ENCODE measurements at regions of chr3 and their contacts with region 1.

Region 1: DNA sequence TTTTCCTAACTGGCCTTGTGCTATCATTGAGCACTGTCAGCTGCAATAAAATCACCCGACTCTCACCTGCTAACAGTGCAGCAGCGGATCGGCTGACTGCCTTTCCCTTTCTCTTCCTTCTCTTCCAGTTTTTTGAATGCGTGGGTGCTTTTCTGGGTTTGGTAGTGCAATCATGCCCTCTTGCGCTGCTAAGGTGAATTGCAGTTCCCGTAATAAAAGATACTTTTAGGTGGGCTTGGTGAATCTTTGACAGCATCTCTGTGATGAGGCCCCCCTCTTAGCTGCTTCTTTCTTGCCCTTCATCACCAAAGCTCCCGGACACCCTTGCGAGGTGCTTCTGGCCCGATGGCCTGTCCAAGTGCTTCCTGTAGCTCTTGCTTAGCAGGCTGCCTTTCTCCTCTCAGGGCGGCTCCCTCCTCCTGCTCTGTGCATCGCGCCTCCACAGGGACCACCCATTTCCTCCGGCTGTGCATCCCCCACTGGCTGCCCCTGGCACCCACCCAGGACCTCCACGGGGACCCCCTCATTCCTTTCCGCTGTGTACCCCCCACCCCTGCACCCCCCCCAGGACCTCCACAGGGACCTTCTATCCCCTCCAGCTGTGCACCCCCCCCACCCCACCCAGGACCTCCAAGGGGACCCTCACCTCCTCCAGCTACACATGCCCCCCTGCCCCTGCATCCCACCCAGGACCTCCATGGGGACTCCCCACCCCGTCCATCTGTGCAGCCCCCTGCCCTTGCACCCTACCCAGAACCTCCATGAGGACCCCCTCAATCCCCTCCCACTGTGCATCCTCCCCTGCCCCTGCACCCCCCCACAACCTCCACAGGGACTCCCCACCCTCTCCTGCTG is 50.8 kb upstream of the RPL32 start:
- DNase-seq: peak in 1 of 2 experiments; percentile 70
- H3K4me3 ChIP-seq: no peak overlapping the region
- H3K27ac ChIP-seq: no peak overlapping the region
- H3K4me1 ChIP-seq: peaks cover 0 to 2% (median 0%) of the 10 kb centered on the region in 4 experiments; a peak in 2 of 7 replicates
- H3K27me3 ChIP-seq: peaks cover 0 to 9% (median 1%) of the 10 kb centered on the region in 4 experiments; a peak in 4 of 7 replicates
- CTCF ChIP-seq: peak; percentile 32 to 92 (median 89)
- EP300 ChIP-seq: no peak
- POLR2A ChIP-seq: no peak
- RAD21 ChIP-seq: peak; percentile 98 to 99

Region 2: DNA sequence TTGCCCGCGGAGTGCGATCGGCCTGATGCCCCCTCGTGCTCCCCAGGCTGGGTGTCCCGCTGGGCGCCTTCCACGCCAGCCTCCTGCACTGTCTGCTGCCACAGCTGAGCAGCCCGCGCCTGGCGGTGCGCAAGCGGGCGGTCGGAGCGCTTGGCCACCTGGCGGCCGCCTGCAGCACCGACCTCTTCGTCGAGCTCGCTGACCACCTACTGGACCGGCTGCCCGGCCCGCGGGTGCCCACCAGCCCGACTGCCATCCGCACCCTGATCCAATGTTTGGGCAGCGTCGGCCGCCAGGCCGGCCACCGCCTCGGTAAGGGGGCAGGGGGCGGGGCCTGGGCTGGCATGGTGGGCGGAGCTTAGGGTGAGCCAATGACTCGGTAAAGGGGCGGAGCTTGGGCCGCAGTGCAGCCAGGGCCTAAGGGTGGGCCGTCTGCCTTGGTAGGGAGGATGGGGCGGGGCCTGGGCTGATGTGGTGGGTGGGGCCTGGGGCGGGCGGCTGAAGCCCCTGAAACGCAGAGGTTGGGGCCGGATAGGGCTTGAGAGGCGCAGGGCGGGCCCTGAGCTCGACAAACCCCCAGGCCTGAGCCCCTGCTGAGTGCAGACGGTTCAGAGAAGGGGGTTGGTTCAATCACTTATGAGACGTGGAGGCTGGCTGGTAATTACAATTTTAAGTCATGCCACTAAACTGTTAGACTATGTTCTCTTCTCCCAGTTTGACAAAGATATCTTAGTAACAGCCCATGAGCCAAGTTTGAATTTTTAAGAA is 82.0 kb before region 1 on chr3:
- CTCF ChIA-PET with region 1: interaction called, 14 read pairs
- POLR2A ChIA-PET with region 1: no interaction called
- DNase-seq: peak; percentile 90 to 99
- H3K4me3 ChIP-seq: peak overlapping the region; percentile 38 to 64 (median 60)
- H3K27ac ChIP-seq: no peak overlapping the region
- H3K4me1 ChIP-seq: peaks cover 0 to 8% (median 4%) of the 10 kb centered on the region in 4 experiments; a peak in 4 of 7 replicates
- H3K27me3 ChIP-seq: no peaks in the 10 kb centered on the region
- CTCF ChIP-seq: peak in 2 of 3 experiments; percentile 60 to 70; a peak in 3 of 4 replicates
- EP300 ChIP-seq: no peak
- POLR2A ChIP-seq: peak in 1 of 2 experiments; percentile 55; a peak in 1 of 3 replicates
- RAD21 ChIP-seq: peak; percentile 38 to 47; a peak in 3 of 4 replicates

Region 3: GRCh38 chr3:12822725-12823373 is 69.4 kb before region 1 on chr3:
- CTCF ChIA-PET with region 1: interaction called, 11 read pairs
- POLR2A ChIA-PET with region 1: no interaction called
- DNase-seq: no peak
- H3K4me3 ChIP-seq: no peak overlapping the region
- H3K27ac ChIP-seq: no peak overlapping the region
- H3K4me1 ChIP-seq: no peaks in the 10 kb centered on the region; a peak in 1 of 7 replicates
- H3K27me3 ChIP-seq: no peaks in the 10 kb centered on the region
- CTCF ChIP-seq: peak in 2 of 3 experiments; percentile 23 to 26; a peak in 2 of 4 replicates
- EP300 ChIP-seq: no peak
- POLR2A ChIP-seq: no peak
- RAD21 ChIP-seq: no peak; a peak in 1 of 4 replicates

Region 4: DNA sequence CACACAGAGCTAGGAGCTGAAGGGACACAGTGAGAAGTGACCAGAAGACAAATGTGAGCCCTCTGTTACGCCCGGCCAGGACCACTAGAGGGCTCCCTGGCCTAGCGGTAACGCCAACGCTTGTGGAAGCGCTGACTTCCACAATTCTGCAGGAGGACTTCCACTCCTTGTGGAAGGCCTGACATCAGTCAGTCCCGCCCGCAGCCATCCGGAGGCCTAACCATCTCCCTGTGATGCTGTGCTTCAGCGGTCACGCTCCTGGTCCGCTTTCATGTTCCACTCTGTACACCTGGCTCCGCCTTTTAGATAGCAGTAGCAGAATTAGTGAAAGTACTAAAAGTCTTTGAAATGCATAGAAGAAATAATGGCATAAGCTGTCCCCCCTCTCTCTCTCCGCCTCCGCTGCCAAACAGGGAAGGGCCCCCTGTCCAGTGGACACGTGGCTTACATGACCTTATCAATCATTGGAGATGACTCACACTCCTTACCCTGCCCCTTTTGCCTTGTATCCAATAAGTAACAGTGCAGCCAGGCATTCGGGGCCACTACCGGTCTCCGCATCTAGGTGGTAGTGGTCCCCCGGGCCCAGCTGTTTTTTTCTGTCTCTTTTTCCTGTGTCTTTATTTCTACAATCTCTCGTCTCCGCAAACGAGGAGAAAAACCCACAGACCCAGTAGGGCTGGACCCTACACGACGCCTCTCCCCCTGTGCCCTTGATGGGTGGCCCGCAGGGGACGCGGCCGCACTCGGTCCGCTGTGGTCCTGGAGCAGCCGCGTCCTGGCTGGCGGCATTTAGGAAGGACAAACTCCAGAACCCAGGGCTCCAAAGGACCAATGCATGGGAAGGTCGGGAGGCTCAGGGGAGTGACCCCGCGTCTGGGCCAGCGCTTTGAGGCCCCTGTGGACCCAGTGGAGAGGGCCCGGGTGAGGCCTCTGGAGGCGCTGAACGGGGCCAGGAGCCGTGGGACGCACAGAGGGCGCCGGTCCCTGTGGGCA is 23.9 kb before region 1 on chr3:
- CTCF ChIA-PET with region 1: interaction called, 353 read pairs
- POLR2A ChIA-PET with region 1: interaction called, 3 read pairs
- DNase-seq: peak; percentile 38 to 80
- H3K4me3 ChIP-seq: peak overlapping the region; percentile 46 to 79 (median 70)
- H3K27ac ChIP-seq: no peak overlapping the region
- H3K4me1 ChIP-seq: peaks cover 0 to 2% (median 2%) of the 10 kb centered on the region in 4 experiments; a peak in 3 of 7 replicates
- H3K27me3 ChIP-seq: peaks cover 0 to 5% (median 0%) of the 10 kb centered on the region in 4 experiments; a peak in 3 of 7 replicates
- CTCF ChIP-seq: peak; percentile 89 to 94 (median 93)
- EP300 ChIP-seq: no peak
- POLR2A ChIP-seq: no peak
- RAD21 ChIP-seq: peak; percentile 84 to 88

Region 5: GRCh38 chr3:12977117-12977808 is 85.1 kb after region 1 on chr3:
- CTCF ChIA-PET with region 1: interaction called, 45 read pairs
- POLR2A ChIA-PET with region 1: no interaction called
- DNase-seq: no peak
- H3K4me3 ChIP-seq: no peak overlapping the region
- H3K27ac ChIP-seq: no peak overlapping the region
- H3K4me1 ChIP-seq: peaks cover 3 to 17% (median 12%) of the 10 kb centered on the region in 4 experiments; a peak in 6 of 7 replicates
- H3K27me3 ChIP-seq: no peaks in the 10 kb centered on the region
- CTCF ChIP-seq: no peak
- EP300 ChIP-seq: no peak
- POLR2A ChIP-seq: no peak
- RAD21 ChIP-seq: no peak

Region 6: GRCh38 chr3:12994607-12995388 is 102.6 kb after region 1 on chr3:
- CTCF ChIA-PET with region 1: interaction called, 10 read pairs
- POLR2A ChIA-PET with region 1: no interaction called
- DNase-seq: peak; percentile 60 to 97
- H3K4me3 ChIP-seq: peak overlapping the region; percentile 52 to 73 (median 60)
- H3K27ac ChIP-seq: no peak overlapping the region; the same call in 1 of the 2 replicates
- H3K4me1 ChIP-seq: peaks cover 0 to 14% (median 10%) of the 10 kb centered on the region in 4 experiments; a peak in 6 of 7 replicates
- H3K27me3 ChIP-seq: peaks cover 0 to 12% (median 8%) of the 10 kb centered on the region in 4 experiments; a peak in 3 of 7 replicates
- CTCF ChIP-seq: peak in 2 of 3 experiments; percentile 88 to 90; a peak in 3 of 4 replicates
- EP300 ChIP-seq: 0 out of 3 replicates have a peak, but pooled peaks of 1 of the 2 experiments have one; percentile 29
- POLR2A ChIP-seq: no peak
- RAD21 ChIP-seq: peak; percentile 60 to 72

Measured in H1 (cell line).